Mammary epithelial cell (primary cell): ENCODE measurements at regions of chr17 and their contacts with region 1.

Region 1: GRCh38 chr17:78745407-78746088 is 36.5 kb downstream of the CYTH1 start:
- DNase-seq: no peak
- H3K4me3 ChIP-seq: no peak overlapping the region
- H3K27ac ChIP-seq: no peak overlapping the region
- H3K4me1 ChIP-seq: peaks cover 24% of the 10 kb centered on the region
- H3K27me3 ChIP-seq: no peaks in the 10 kb centered on the region
- CTCF ChIP-seq: peak; percentile 40 to 48

Region 2: GRCh38 chr17:78665952-78666920 is 79.3 kb before region 1 on chr17:
- CTCF ChIA-PET with region 1: no interaction called
- dilution Hi-C with region 1: no loop called
- in situ Hi-C with region 1: no loop called
- intact Hi-C with region 1: no loop called
- DNase-seq: no peak
- H3K4me3 ChIP-seq: no peak overlapping the region
- H3K27ac ChIP-seq: no peak overlapping the region
- H3K4me1 ChIP-seq: peaks cover 21% of the 10 kb centered on the region
- H3K27me3 ChIP-seq: no peaks in the 10 kb centered on the region
- CTCF ChIP-seq: no peak

Region 3: DNA sequence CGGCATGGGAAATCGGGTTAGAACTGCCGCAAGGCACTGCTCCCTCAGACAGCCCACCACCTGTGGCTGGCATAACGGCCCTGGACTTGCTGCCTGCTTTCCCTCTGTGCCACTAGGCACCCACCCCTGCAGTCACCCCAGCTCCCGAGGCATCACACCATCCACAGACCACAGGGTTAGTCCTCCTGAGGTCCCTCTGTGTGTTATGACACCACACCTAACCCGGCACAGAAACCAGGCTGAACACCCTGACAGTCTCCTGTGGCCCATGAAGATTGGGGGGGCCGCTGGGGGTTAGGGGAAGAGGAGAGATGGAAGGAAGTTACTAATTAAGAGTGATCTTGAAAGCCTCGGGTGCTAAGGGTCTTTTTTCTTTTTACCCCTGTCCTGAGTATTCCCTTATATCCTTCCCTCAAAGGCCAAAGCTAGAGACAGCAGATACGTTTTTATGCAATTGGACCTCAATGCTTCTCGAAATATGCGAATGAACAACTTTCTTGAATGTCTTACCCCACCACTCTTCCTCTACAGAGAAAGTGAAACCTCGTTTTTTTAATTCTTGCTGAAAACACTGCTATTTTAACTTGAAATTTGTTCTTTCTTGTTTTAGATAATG is 29.5 kb after region 1 on chr17:
- CTCF ChIA-PET with region 1: no interaction called
- dilution Hi-C with region 1: no loop called
- in situ Hi-C with region 1: no loop called
- intact Hi-C with region 1: loop called (anchors 2 kb)
- DNase-seq: peak; percentile 47
- H3K4me3 ChIP-seq: peak overlapping the region; percentile 40 to 58 (median 49)
- H3K27ac ChIP-seq: peak overlapping the region; percentile 72
- H3K4me1 ChIP-seq: peaks cover 28% of the 10 kb centered on the region
- H3K27me3 ChIP-seq: no peaks in the 10 kb centered on the region
- CTCF ChIP-seq: no peak